ENCODE measurements at regions of chr5 and their contacts with region 1.

Region 1: DNA sequence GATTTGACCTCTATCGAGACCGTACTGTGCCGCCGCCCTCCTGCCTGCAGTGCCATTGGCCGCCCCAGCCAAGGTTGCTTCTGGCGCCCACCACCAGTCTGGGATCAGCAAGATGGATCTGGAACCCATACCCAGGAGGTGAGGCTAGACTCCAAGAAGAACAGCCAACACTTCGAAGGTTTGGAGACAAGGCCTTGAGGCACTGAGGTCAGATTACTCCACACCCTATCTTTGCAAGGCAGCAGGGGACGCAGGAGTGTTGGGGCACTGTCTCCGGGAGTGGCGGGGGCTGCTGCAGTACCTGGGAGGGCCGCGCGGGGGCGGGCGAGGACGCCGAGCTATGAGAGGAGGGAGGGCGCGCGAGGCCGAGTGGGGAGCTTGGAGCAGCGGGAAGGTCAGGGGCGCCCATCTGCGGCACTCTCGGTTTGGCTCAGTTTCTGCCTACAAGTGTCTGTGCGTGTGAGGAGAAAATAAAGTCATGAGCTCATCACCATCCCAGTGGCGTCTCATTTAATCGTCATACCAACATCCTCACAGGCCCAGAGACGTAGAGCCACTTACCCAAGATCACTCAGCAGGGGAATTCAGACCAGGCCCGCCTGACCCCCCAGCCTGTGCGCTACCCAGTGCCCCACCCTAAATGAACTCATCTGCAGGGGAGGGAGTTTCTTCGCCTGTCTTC is 20.5 kb upstream of the PSD2 start:
- DNase-seq: no peak
- H3K4me3 ChIP-seq: no peak overlapping the region
- H3K27ac ChIP-seq: no peak overlapping the region
- H3K27me3 ChIP-seq: peaks cover 30% of the 10 kb centered on the region
- CTCF ChIP-seq: peak; percentile 80

Region 2: DNA sequence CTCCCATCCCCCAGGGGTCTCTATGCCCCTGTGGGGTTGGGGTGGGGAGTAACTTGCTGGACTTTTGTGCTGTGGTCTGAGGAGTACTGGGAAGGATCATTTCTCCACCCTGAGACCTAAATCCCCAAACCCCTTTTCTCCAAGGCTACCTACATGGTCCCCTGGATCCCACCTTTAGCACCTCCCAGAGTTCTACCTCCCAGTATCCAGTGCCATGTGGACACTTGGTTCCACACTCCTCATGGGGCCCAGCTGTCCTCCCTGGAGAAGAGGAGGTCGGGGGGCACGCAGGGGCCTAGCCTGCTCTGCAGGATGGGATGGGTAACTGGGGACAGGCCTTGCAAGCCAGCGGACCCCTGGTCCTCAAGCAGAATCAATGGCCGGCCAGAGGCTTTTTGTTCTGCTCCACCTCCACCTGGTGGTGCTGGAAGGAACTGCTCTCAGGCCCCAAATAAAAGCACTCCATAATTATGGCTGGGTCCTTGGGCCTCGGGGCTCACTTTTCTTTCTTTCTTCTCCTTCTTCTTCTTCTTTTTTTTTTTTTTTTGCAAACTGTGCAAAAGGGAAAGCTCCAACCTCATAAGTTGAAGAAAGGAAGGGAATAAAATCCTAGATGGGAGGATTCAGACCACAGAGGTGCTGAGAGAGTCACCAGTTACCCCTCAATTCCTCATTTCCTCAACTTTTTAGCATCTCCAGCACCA is 88.9 kb after region 1 on chr5:
- CTCF ChIA-PET with region 1: interaction called, 17 read pairs
- POLR2A ChIA-PET with region 1: no interaction called
- DNase-seq: peak; percentile 15
- H3K4me3 ChIP-seq: no peak overlapping the region
- H3K27ac ChIP-seq: no peak overlapping the region
- H3K27me3 ChIP-seq: peaks cover 30% of the 10 kb centered on the region
- CTCF ChIP-seq: peak; percentile 92

Measured in AG04450 (cell line).